HepG2 (cell line): ENCODE measurements at regions of chr12 and their contacts with region 1.

Region 1: GRCh38 chr12:46372544-46373110 is at the start of gene SLC38A2:
- DNase-seq: peak; percentile 84
- ATAC-seq: peak; percentile 86
- H3K4me3 ChIP-seq: peak within 1 kb of the TSS; percentile 84 to 96 (median 94)
- H3K27ac ChIP-seq: peak within 1 kb of the TSS; percentile 97
- H3K4me1 ChIP-seq: peaks cover 56% of the 10 kb centered on the region
- H3K27me3 ChIP-seq: peaks cover 0 to 3% of the 10 kb centered on the region in 2 experiments; a peak in 2 of 5 replicates
- CTCF ChIP-seq: no peak
- EP300 ChIP-seq: peak in 1 of 2 experiments; percentile 60; a peak in 2 of 4 replicates
- POLR2A ChIP-seq: peak; percentile 100
- RAD21 ChIP-seq: no peak; the same call in 1 of the 2 replicates
- total RNA-seq, gene SLC38A2: 230 and 368 TPM in 2 replicates

Region 2: GRCh38 chr12:46357438-46358324 is 14.9 kb before region 1 on chr12:
- CTCF ChIA-PET with region 1: no interaction called
- POLR2A ChIA-PET with region 1: interaction called, 23 read pairs
- in situ Hi-C with region 1: no loop called
- intact Hi-C with region 1: no loop called
- DNase-seq: peak; percentile 75
- ATAC-seq: peak; percentile 59
- H3K4me3 ChIP-seq: no peak overlapping the region
- H3K27ac ChIP-seq: peak overlapping the region; percentile 10
- H3K4me1 ChIP-seq: peaks cover 16% of the 10 kb centered on the region
- H3K27me3 ChIP-seq: no peaks in the 10 kb centered on the region
- CTCF ChIP-seq: no peak
- EP300 ChIP-seq: no peak
- POLR2A ChIP-seq: peak; percentile 71 to 89
- RAD21 ChIP-seq: peak; percentile 60

Region 3: DNA sequence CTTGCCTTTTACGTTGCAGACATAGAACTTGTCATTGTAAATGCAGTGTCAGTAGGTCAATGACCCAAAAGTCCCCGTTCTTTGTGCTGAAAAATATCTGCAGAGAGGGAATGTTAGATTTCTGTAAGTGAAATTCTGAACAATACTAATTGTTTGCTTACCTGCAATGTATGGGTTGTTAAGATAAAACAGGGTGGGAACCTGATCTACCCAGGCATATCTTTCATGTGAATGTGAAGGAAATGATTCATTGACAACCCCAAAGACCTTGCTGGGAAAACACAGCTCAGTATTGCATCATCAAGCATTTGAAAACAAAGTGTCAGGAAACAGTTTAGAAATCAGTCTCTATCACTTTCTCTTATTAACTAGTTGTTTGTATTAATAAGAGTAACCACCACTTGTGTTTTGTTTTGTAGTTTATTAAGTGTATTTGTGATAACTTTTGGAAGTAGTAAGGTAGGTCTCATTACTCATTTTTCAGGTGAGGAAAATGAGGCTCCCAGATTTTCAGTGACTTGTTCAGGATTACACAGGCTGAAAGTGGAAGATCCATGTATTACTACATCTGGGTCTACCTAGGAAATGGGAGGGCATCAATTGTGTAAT is 57.8 kb after region 1 on chr12:
- CTCF ChIA-PET with region 1: no interaction called
- POLR2A ChIA-PET with region 1: interaction called, 8 read pairs
- in situ Hi-C with region 1: no loop called
- intact Hi-C with region 1: loop called (anchors 2 kb)
- DNase-seq: peak; percentile 95
- ATAC-seq: peak; percentile 90
- H3K4me3 ChIP-seq: peak overlapping the region in 1 of 3 experiments; percentile 2; a peak in 2 of 6 replicates
- H3K27ac ChIP-seq: peak overlapping the region; percentile 58
- H3K4me1 ChIP-seq: peaks cover 37% of the 10 kb centered on the region
- H3K27me3 ChIP-seq: no peaks in the 10 kb centered on the region
- CTCF ChIP-seq: no peak
- EP300 ChIP-seq: peak in 1 of 2 experiments; percentile 92; a peak in 2 of 4 replicates
- POLR2A ChIP-seq: no peak
- RAD21 ChIP-seq: no peak

Region 4: GRCh38 chr12:46483572-46484395 is 111.2 kb after region 1 on chr12:
- CTCF ChIA-PET with region 1: no interaction called
- POLR2A ChIA-PET with region 1: interaction called, 17 read pairs
- in situ Hi-C with region 1: no loop called
- intact Hi-C with region 1: no loop called
- DNase-seq: peak; percentile 94
- ATAC-seq: peak; percentile 98
- H3K4me3 ChIP-seq: peak overlapping the region in 1 of 3 experiments; percentile 3; a peak in 1 of 6 replicates
- H3K27ac ChIP-seq: peak overlapping the region; percentile 73
- H3K4me1 ChIP-seq: peaks cover 82% of the 10 kb centered on the region
- H3K27me3 ChIP-seq: no peaks in the 10 kb centered on the region
- CTCF ChIP-seq: no peak
- EP300 ChIP-seq: peak in 1 of 2 experiments; percentile 90; a peak in 2 of 4 replicates
- POLR2A ChIP-seq: no peak
- RAD21 ChIP-seq: no peak

Region 5: GRCh38 chr12:46523863-46524770 is 151.5 kb after region 1 on chr12:
- CTCF ChIA-PET with region 1: no interaction called
- POLR2A ChIA-PET with region 1: interaction called, 11 read pairs
- in situ Hi-C with region 1: no loop called
- intact Hi-C with region 1: no loop called
- DNase-seq: peak; percentile 92
- ATAC-seq: peak; percentile 89
- H3K4me3 ChIP-seq: peak overlapping the region; percentile 29 to 52 (median 38); a peak in 5 of 6 replicates
- H3K27ac ChIP-seq: peak overlapping the region; percentile 59
- H3K4me1 ChIP-seq: peaks cover 65% of the 10 kb centered on the region
- H3K27me3 ChIP-seq: no peaks in the 10 kb centered on the region
- CTCF ChIP-seq: no peak
- EP300 ChIP-seq: peak in 1 of 2 experiments; percentile 83; a peak in 2 of 4 replicates
- POLR2A ChIP-seq: peak in 1 of 2 experiments; percentile 38; a peak in 1 of 4 replicates
- RAD21 ChIP-seq: no peak

Region 6: GRCh38 chr12:46661110-46661845 is 288.7 kb after region 1 on chr12:
- CTCF ChIA-PET with region 1: interaction called, 3 read pairs
- POLR2A ChIA-PET with region 1: interaction called, 3 read pairs
- in situ Hi-C with region 1: loop called (anchors 5 kb)
- intact Hi-C with region 1: loop called (anchors 1 kb)
- DNase-seq: peak; percentile 77
- ATAC-seq: peak; percentile 88
- H3K4me3 ChIP-seq: no peak overlapping the region
- H3K27ac ChIP-seq: peak overlapping the region; percentile 5
- H3K4me1 ChIP-seq: peaks cover 53% of the 10 kb centered on the region
- H3K27me3 ChIP-seq: no peaks in the 10 kb centered on the region
- CTCF ChIP-seq: peak; percentile 78
- EP300 ChIP-seq: no peak; a peak in 1 of 4 replicates
- POLR2A ChIP-seq: no peak
- RAD21 ChIP-seq: peak; percentile 75